ENCODE measurements at regions of chr20 and their contacts with region 1.

Region 1: GRCh38 chr20:9978397-9979004 is 56.3 kb upstream of the ANKEF1 start:
- DNase-seq: peak; percentile 40 to 60
- H3K4me3 ChIP-seq: no peak overlapping the region
- H3K4me3 Mint-ChIP-seq: no peak overlapping the region
- H3K27ac Mint-ChIP-seq: no peak overlapping the region
- H3K4me1 ChIP-seq: no peaks in the 10 kb centered on the region
- H3K4me1 Mint-ChIP-seq: no peaks in the 10 kb centered on the region
- H3K27me3 ChIP-seq: no peaks in the 10 kb centered on the region
- H3K27me3 Mint-ChIP-seq: peaks cover 2% of the 10 kb centered on the region
- CTCF ChIP-seq: peak; percentile 70 to 82

Region 2: DNA sequence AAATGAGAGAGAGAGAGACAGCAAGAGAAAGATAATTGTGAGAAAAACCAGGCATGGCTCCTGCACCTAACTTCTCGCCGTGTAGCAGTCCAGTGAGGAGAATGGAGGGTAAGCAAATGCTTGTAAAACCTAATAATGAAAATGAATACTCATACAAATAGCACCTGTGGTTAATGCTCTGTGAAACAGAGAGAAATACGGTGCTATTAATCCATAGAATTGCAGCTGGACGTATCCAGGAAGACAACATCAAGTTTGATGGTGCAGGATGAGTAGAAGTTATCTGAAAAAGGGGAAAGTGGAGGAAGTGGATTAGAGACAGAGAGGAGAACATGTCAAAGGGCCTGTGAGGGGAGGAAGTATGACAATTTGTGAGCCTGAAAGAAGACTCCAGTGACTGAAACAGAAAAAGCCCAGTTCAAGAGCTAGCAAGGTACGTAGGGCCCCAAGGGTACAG is 50.2 kb before region 1 on chr20:
- CTCF ChIA-PET with region 1: no interaction called
- POLR2A ChIA-PET with region 1: no interaction called
- intact Hi-C with region 1: no loop called
- DNase-seq: no peak
- H3K4me3 ChIP-seq: no peak overlapping the region
- H3K4me3 Mint-ChIP-seq: no peak overlapping the region
- H3K27ac Mint-ChIP-seq: no peak overlapping the region
- H3K4me1 ChIP-seq: no peaks in the 10 kb centered on the region
- H3K4me1 Mint-ChIP-seq: no peaks in the 10 kb centered on the region
- H3K27me3 ChIP-seq: no peaks in the 10 kb centered on the region
- H3K27me3 Mint-ChIP-seq: no peaks in the 10 kb centered on the region
- CTCF ChIP-seq: no peak

Region 3: DNA sequence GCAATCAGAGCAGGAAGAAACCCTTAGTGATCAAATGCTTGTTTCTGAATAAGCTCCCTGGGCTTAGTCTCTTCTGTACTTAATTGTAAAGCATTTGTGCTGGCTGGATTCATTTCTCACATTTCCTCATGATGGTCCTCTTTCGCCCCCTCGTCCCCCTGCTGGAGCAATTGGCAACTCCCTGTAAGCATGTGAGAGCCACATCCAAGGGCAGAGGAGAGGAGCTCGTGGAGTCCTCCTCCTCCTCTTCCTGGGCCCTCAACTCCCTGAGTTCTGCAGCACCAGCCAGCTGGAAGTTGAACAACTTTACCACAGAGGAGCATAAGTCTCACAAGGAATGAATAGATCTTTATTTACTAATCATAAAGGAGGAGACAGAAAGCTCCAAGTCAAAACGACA is 68.9 kb after region 1 on chr20:
- CTCF ChIA-PET with region 1: interaction called, 6 read pairs
- POLR2A ChIA-PET with region 1: no interaction called
- intact Hi-C with region 1: loop called (anchors 1 kb)
- DNase-seq: peak in 1 of 2 experiments; percentile 46
- H3K4me3 ChIP-seq: no peak overlapping the region
- H3K4me3 Mint-ChIP-seq: no peak overlapping the region
- H3K27ac Mint-ChIP-seq: no peak overlapping the region
- H3K4me1 ChIP-seq: no peaks in the 10 kb centered on the region
- H3K4me1 Mint-ChIP-seq: no peaks in the 10 kb centered on the region
- H3K27me3 ChIP-seq: no peaks in the 10 kb centered on the region
- H3K27me3 Mint-ChIP-seq: no peaks in the 10 kb centered on the region
- CTCF ChIP-seq: peak; percentile 44 to 60

Region 4: DNA sequence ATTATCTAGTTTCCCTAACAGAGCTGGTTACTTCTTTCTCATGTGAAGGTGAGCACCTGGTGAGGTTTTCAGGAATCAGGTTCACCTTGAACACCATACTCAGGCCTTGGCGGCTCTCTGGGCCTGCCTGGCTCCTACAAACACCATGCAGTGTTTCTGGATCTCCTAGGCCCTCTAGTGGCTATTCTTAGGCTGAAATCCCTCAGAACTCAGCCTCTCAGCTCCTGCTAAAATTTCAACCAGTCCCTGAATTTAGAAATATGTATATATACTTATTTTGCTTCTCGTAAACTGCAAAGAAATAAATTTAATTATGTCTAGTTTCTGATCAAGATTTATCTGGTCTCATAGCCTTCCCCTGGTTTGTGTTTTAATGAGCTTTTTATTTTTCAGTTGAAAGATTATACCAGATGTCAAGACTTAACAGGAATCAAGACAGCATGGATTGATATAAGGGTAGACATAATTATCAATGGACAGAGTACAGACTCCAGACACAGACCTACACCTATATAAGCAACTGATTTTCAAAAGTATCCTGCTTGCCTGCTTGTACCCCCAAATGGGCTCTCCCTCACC is 112.2 kb after region 1 on chr20:
- CTCF ChIA-PET with region 1: interaction called, 35 read pairs
- POLR2A ChIA-PET with region 1: no interaction called
- intact Hi-C with region 1: loop called (anchors 1 kb)
- DNase-seq: peak; percentile 48 to 60
- H3K4me3 ChIP-seq: no peak overlapping the region
- H3K4me3 Mint-ChIP-seq: no peak overlapping the region
- H3K27ac Mint-ChIP-seq: no peak overlapping the region
- H3K4me1 ChIP-seq: no peaks in the 10 kb centered on the region
- H3K4me1 Mint-ChIP-seq: no peaks in the 10 kb centered on the region
- H3K27me3 ChIP-seq: no peaks in the 10 kb centered on the region
- H3K27me3 Mint-ChIP-seq: peaks cover 6% of the 10 kb centered on the region
- CTCF ChIP-seq: peak; percentile 70 to 86

Region 5: GRCh38 chr20:10225439-10226060 is 247.0 kb after region 1 on chr20:
- CTCF ChIA-PET with region 1: interaction called, 6 read pairs
- POLR2A ChIA-PET with region 1: no interaction called
- intact Hi-C with region 1: loop called (anchors 2 kb)
- DNase-seq: peak in 1 of 2 experiments; percentile 24
- H3K4me3 ChIP-seq: no peak overlapping the region
- H3K4me3 Mint-ChIP-seq: no peak overlapping the region
- H3K27ac Mint-ChIP-seq: no peak overlapping the region
- H3K4me1 ChIP-seq: no peaks in the 10 kb centered on the region
- H3K4me1 Mint-ChIP-seq: no peaks in the 10 kb centered on the region
- H3K27me3 ChIP-seq: no peaks in the 10 kb centered on the region
- H3K27me3 Mint-ChIP-seq: peaks cover 12% of the 10 kb centered on the region
- CTCF ChIP-seq: peak; percentile 44 to 65

Region 6: DNA sequence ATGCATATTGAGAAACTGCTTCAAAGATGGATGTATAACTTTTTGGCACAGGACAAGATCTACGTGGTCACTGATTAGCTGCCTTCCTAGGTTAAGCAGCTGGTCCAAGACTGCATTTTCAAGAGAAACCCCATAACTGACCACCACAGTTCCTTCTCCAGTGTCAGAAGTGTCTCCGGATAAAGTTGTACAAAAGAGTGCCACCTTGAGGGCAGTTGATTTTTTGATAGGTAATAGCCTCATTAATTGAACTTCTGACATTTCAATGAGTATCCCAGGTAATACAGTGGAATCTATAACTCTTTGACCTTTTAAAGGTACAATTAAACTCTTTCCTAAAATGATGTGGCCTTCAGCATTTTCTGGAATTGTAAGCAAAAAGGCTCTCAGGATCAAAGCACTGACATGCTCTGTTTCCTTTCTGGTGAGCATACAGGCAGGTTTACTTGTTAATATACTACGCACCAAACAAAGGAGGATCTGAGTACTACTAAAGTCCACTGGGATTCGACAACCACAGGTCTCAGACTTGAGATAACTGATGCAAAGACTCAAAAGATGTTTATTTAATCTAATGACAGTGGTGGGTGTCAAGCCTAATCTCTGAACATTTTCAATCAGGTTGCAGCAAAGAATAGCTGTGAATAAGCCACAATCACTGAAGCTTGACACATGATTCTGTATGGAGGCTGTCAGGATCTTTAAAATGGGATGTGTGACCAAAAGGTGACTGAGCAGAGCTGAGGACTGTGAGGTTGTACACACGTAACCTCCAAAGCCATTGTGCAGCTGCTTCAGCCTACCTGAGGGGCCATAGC is 434.3 kb after region 1 on chr20:
- CTCF ChIA-PET with region 1: no interaction called
- POLR2A ChIA-PET with region 1: no interaction called
- intact Hi-C with region 1: loop called (anchors 5 kb)
- DNase-seq: no peak
- H3K4me3 ChIP-seq: no peak overlapping the region
- H3K4me3 Mint-ChIP-seq: no peak overlapping the region
- H3K27ac Mint-ChIP-seq: no peak overlapping the region
- H3K4me1 ChIP-seq: no peaks in the 10 kb centered on the region
- H3K4me1 Mint-ChIP-seq: no peaks in the 10 kb centered on the region
- H3K27me3 ChIP-seq: no peaks in the 10 kb centered on the region
- H3K27me3 Mint-ChIP-seq: no peaks in the 10 kb centered on the region
- CTCF ChIP-seq: peak in 1 of 2 experiments; percentile 20

Region 7: GRCh38 chr20:10427060-10427692 is 448.7 kb after region 1 on chr20:
- CTCF ChIA-PET with region 1: no interaction called
- POLR2A ChIA-PET with region 1: no interaction called
- intact Hi-C with region 1: loop called (anchors 1 kb)
- DNase-seq: peak; percentile 48
- H3K4me3 ChIP-seq: no peak overlapping the region
- H3K4me3 Mint-ChIP-seq: no peak overlapping the region
- H3K27ac Mint-ChIP-seq: no peak overlapping the region
- H3K4me1 ChIP-seq: peaks cover 17% of the 10 kb centered on the region
- H3K4me1 Mint-ChIP-seq: peaks cover 20% of the 10 kb centered on the region
- H3K27me3 ChIP-seq: no peaks in the 10 kb centered on the region
- H3K27me3 Mint-ChIP-seq: no peaks in the 10 kb centered on the region
- CTCF ChIP-seq: peak; percentile 71 to 84

Region 8: GRCh38 chr20:10536531-10536930 is 558.0 kb after region 1 on chr20:
- CTCF ChIA-PET with region 1: interaction called, 5 read pairs
- POLR2A ChIA-PET with region 1: no interaction called
- intact Hi-C with region 1: loop called (anchors 1 kb)
- DNase-seq: peak; percentile 46 to 60
- H3K4me3 ChIP-seq: no peak overlapping the region
- H3K4me3 Mint-ChIP-seq: no peak overlapping the region
- H3K27ac Mint-ChIP-seq: no peak overlapping the region
- H3K4me1 ChIP-seq: peaks cover 17% of the 10 kb centered on the region
- H3K4me1 Mint-ChIP-seq: peaks cover 14% of the 10 kb centered on the region
- H3K27me3 ChIP-seq: no peaks in the 10 kb centered on the region
- H3K27me3 Mint-ChIP-seq: no peaks in the 10 kb centered on the region
- CTCF ChIP-seq: peak; percentile 56 to 76